ENCODE measurements at regions of chr3 and their contacts with region 1.

Region 1: GRCh38 chr3:47617086-47618010 is 38.7 kb upstream of the CSPG5 start:
- DNase-seq: no peak
- H3K4me3 ChIP-seq: no peak overlapping the region
- H3K27ac ChIP-seq: no peak overlapping the region
- H3K4me1 ChIP-seq: peaks cover 11% of the 10 kb centered on the region
- CTCF ChIP-seq: no peak

Region 2: GRCh38 chr3:46681856-46682540 is 935.4 kb before region 1 on chr3:
- CTCF ChIA-PET with region 1: no interaction called
- POLR2A ChIA-PET with region 1: no interaction called
- intact Hi-C with region 1: no loop called
- DNase-seq: no peak
- H3K4me3 ChIP-seq: no peak overlapping the region
- H3K27ac ChIP-seq: no peak overlapping the region
- H3K4me1 ChIP-seq: no peaks in the 10 kb centered on the region
- CTCF ChIP-seq: no peak

Region 3: DNA sequence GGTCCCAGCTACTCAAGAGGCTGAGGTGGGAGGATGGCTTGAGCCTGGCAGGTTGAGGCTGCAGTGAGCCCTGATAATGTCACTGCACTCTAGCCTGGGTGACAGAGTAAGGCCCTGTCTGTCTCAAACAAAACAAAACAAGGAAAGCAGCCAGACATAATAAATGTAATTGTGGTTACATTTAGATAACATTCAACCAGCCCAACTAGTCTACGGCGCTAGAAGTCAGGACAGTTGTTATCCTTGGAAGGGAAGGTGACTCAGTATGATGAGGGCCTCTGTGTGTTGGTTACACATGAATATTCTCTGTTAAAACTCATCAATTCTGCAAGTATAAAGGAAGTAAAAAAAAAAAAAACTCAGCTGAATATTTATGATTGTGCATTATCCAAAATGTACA is 11.7 kb before region 1 on chr3:
- CTCF ChIA-PET with region 1: no interaction called
- POLR2A ChIA-PET with region 1: interaction called, 10 read pairs
- intact Hi-C with region 1: no loop called
- DNase-seq: no peak
- H3K4me3 ChIP-seq: no peak overlapping the region
- H3K27ac ChIP-seq: no peak overlapping the region
- H3K4me1 ChIP-seq: no peaks in the 10 kb centered on the region
- CTCF ChIP-seq: no peak